ENCODE measurements at regions of chr6 and their contacts with region 1.

Region 1: GRCh38 chr6:125918681-125919566 is 37.6 kb upstream of the HINT3 start:
- DNase-seq: peak; percentile 85 to 97 (median 96)
- H3K4me3 ChIP-seq: peak overlapping the region in 6 of 7 experiments; percentile 31 to 88 (median 62)
- H3K27ac ChIP-seq: peak overlapping the region; percentile 94 to 95
- H3K4me1 ChIP-seq: peaks cover 8 to 64% (median 33%) of the 10 kb centered on the region in 4 experiments
- H3K27me3 ChIP-seq: no peaks in the 10 kb centered on the region

Region 2: DNA sequence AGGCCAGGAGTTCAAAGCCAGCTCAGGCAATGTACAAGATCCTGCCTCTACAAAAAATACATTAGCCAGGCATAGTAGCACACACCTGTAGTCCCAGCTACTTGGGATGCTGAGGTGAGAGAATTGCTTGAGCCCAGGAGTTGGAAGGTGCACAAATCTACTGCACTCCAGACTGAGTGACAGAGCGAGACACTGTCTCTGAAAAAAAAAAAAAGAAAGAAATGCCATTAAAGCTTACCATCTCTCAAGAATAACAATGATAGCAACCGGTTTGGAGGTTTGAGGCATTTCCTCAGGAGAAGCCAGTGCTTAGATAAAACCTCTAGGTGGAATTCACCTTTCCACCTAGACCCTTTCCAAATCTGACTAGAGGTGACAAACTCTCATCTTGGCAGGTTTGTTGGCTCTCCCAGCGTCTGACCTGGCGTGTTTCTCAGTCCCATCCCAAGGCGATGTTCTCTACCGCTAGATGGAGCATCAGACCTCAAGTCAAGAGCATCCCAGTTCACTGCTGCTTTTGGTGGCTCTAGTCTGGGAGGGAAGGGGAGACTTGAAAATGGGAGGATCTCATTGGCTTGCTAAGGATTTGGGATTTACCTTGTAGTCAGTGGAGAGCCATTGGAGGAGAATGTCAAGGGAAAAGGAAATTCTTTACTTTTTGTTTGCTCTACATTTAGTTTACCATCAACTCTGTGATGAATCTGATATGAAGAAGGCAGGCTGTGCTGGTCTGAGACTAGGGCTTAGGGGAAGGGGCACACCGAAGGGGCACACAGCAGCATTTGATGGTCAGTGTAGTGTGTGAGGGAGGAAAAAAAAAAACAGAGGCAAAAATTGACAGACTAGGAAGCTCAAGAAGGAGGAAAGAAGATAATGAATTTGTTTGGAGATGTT is 60.2 kb before region 1 on chr6:
- CTCF ChIA-PET with region 1: interaction called, 5 read pairs
- POLR2A ChIA-PET with region 1: interaction called, 10 read pairs
- DNase-seq: peak; percentile 59 to 67 (median 66)
- H3K4me3 ChIP-seq: no peak overlapping the region
- H3K27ac ChIP-seq: no peak overlapping the region
- H3K4me1 ChIP-seq: peaks cover 1 to 3% (median 2%) of the 10 kb centered on the region in 4 experiments
- H3K27me3 ChIP-seq: no peaks in the 10 kb centered on the region

Region 3: DNA sequence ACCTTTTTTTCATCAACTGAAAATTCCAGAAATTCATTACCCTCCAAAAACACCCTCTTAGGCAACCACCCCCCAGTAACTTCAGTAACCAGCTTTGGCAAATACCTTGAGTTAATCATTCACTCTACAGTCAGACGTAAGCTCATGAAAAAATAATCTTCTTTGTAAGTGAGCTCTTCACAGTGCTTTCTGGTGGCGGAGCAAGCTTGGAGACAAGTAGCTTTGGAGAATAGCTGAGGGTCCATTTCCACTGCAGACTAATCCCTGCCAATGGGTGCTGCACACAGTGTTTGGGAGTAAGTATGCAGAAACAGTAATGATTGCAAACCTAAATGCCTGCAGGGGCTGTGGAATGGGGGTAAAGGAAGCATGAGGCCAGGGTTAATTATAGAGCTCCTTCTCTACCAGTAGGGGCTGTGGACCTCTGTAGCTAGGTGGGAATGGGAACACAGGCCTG is 19.2 kb before region 1 on chr6:
- CTCF ChIA-PET with region 1: interaction called, 113 read pairs
- POLR2A ChIA-PET with region 1: no interaction called
- DNase-seq: no peak
- H3K4me3 ChIP-seq: no peak overlapping the region
- H3K27ac ChIP-seq: no peak overlapping the region
- H3K4me1 ChIP-seq: peaks cover 0 to 9% (median 6%) of the 10 kb centered on the region in 4 experiments
- H3K27me3 ChIP-seq: no peaks in the 10 kb centered on the region

Region 4: GRCh38 chr6:125906158-125906998 is 12.5 kb before region 1 on chr6:
- CTCF ChIA-PET with region 1: interaction called, 113 read pairs
- POLR2A ChIA-PET with region 1: interaction called, 3 read pairs
- DNase-seq: peak; percentile 53 to 66 (median 55)
- H3K4me3 ChIP-seq: no peak overlapping the region
- H3K27ac ChIP-seq: no peak overlapping the region
- H3K4me1 ChIP-seq: peaks cover 0 to 10% (median 7%) of the 10 kb centered on the region in 4 experiments
- H3K27me3 ChIP-seq: no peaks in the 10 kb centered on the region

Region 5: DNA sequence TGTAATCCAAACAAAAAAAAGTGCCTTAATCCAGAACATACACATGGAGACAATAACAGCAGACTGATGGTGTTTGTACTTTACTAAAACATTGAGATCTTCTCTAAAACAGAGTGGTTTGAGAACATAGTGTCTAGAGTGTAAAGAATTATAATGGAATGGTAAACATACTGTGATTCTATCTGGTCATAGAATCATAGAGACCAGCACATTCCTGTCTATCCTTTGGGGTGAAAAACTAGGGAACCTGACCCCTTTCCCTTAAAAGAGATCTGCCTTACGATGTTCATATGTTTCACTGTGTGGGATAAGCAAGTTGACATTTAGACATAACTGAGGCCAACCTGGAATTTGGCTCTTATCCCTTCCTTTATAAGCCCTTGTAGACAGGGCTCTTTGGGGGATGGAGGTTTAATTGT is 123.1 kb after region 1 on chr6:
- CTCF ChIA-PET with region 1: no interaction called
- POLR2A ChIA-PET with region 1: no interaction called
- DNase-seq: no peak
- H3K4me3 ChIP-seq: no peak overlapping the region
- H3K27ac ChIP-seq: no peak overlapping the region
- H3K4me1 ChIP-seq: peaks cover 0 to 14% (median 3%) of the 10 kb centered on the region in 4 experiments
- H3K27me3 ChIP-seq: no peaks in the 10 kb centered on the region

Measured in common myeloid progenitor, CD34-positive (primary cell).